ENCODE measurements at regions of chr1 and their contacts with region 1.

Region 1: DNA sequence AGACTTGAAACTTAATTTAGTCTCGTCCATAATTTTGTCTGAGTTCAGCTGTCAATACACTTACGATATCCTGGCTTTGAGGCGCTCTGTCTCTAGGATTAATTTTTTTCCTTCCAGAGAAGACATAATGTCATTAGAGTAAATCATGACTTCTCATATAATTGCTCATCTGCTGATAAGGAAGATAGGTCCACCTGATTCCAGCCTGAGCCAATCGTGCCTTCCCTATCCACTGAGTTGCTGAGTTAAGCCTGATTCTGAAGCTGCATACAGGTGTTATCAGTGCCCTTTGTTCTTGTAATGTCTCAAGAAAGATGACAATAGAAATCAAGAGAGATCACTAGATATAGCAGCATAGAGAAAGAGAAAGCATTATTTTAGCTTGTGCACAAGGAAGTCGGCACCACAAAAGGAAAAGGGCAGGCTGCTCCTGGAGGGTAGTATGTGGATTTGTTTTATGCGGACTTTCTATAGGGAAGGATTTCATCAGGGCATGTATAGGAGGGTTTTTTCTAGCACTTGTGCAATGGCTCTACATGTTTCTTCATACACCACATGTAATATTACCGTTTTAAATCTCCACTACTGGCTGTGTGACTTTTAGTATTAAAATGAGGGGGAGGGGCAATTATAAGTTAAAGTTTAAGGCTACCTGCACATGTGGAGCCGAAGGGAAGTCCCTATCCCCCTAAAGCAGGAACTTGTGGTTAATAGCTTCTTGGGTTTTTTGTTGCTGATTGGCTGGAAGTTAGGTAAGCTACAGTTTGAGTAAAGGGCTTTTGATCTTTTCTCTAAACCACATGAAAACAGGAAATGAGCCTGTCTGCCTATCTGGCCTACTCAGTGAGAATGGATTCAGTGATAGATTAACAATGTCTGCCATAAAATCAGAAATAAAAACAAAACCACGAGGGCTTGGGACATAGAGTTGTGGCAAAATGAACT is 133.4 kb downstream of the PLPPR5 start:
- DNase-seq: peak in 1 of 2 donors; percentile 91
- ATAC-seq: peak; percentile 86 to 91 (median 89)
- H3K4me3 ChIP-seq: peak overlapping the region; percentile 22
- H3K4me3 Mint-ChIP-seq: peak overlapping the region; percentile 74
- H3K27ac ChIP-seq: peak overlapping the region; percentile 82
- H3K27ac Mint-ChIP-seq: peak overlapping the region; percentile 84 to 93
- H3K4me1 ChIP-seq: peaks cover 14% of the 10 kb centered on the region
- H3K4me1 Mint-ChIP-seq: peaks cover 17 to 27% of the 10 kb centered on the region in 2 donors
- H3K27me3 ChIP-seq: no peaks in the 10 kb centered on the region
- H3K27me3 Mint-ChIP-seq: no peaks in the 10 kb centered on the region
- CTCF ChIP-seq: no peak

Region 2: GRCh38 chr1:98854137-98854536 is 17.1 kb before region 1 on chr1:
- intact Hi-C with region 1: loop called (anchors 1 kb)
- DNase-seq: peak in 1 of 2 donors; percentile 57
- ATAC-seq: peak; percentile 64 to 90 (median 87)
- H3K4me3 ChIP-seq: no peak overlapping the region
- H3K4me3 Mint-ChIP-seq: no peak overlapping the region
- H3K27ac ChIP-seq: peak overlapping the region; percentile 52
- H3K27ac Mint-ChIP-seq: no peak overlapping the region
- H3K4me1 ChIP-seq: peaks cover 5% of the 10 kb centered on the region
- H3K4me1 Mint-ChIP-seq: peaks cover 0 to 10% of the 10 kb centered on the region in 2 donors
- H3K27me3 ChIP-seq: no peaks in the 10 kb centered on the region
- H3K27me3 Mint-ChIP-seq: no peaks in the 10 kb centered on the region
- CTCF ChIP-seq: no peak

Region 3: DNA sequence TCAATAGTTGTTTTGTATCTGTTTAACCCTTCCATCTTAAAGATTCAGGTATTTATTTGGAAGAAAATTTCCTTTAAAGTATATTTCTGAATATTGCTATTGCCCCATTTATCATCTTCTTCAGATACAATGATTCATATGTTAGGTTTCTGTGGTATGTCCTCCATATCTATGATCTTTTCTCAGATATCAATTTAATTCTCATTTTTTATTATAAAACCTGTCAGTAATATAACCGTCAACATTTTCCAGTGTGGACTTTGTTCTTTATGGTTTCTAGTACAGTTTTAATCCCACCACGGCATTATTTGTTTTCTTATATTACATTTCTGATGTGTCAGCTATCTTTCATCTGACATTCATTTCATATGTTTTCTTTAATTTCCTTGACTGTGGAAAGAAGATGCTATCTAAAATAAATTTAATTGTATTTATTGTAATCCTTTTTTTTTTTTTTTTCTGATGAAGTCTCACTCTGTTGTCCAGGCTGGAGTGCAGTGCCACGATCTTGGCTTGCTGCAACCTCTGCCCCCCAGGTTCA is 35.6 kb after region 1 on chr1:
- intact Hi-C with region 1: no loop called
- DNase-seq: no peak
- ATAC-seq: no peak
- H3K4me3 ChIP-seq: no peak overlapping the region
- H3K4me3 Mint-ChIP-seq: no peak overlapping the region
- H3K27ac ChIP-seq: no peak overlapping the region
- H3K27ac Mint-ChIP-seq: no peak overlapping the region
- H3K4me1 ChIP-seq: no peaks in the 10 kb centered on the region
- H3K4me1 Mint-ChIP-seq: no peaks in the 10 kb centered on the region
- H3K27me3 ChIP-seq: no peaks in the 10 kb centered on the region
- H3K27me3 Mint-ChIP-seq: peaks cover 0 to 5% of the 10 kb centered on the region in 2 donors
- CTCF ChIP-seq: no peak

Region 4: DNA sequence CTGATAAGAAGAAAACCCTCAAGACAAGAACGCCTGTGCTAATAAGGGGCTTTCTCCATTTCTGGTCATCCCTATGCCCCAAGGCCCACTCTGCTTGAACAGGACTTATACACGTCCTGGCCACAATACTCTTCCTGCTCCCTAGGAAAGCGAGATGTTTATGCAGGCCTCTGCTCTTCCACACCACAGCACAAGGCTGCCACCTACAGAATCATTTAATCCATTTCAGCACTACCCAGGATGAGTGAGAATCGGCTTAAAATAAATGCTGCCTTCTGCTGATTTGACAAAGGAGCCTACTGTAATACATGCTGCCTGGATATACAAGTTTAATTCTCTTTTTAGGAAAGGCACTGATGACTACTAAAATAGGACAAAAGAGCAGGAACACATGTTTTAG is 865.8 kb after region 1 on chr1:
- intact Hi-C with region 1: no loop called
- DNase-seq: peak in 1 of 2 donors; percentile 3
- ATAC-seq: no peak
- H3K4me3 ChIP-seq: no peak overlapping the region
- H3K4me3 Mint-ChIP-seq: no peak overlapping the region
- H3K27ac ChIP-seq: no peak overlapping the region
- H3K27ac Mint-ChIP-seq: no peak overlapping the region
- H3K4me1 ChIP-seq: no peaks in the 10 kb centered on the region
- H3K4me1 Mint-ChIP-seq: no peaks in the 10 kb centered on the region
- H3K27me3 ChIP-seq: no peaks in the 10 kb centered on the region
- H3K27me3 Mint-ChIP-seq: no peaks in the 10 kb centered on the region
- CTCF ChIP-seq: no peak